Activated CD4-positive, alpha-beta T cell treated with anti-CD3 and anti-CD28 coated beads, Interleukin-2, amount 10 ng/mL, durations not matched to agents 24 days and 14 days (primary cell): ENCODE measurements at regions of chr19 and their contacts with region 1.

Region 1: GRCh38 chr19:12139885-12140547 is at the start of gene ZNF20:
- DNase-seq: peak; percentile 97
- H3K4me3 Mint-ChIP-seq: peak within 1 kb of the TSS; percentile 90
- H3K27ac Mint-ChIP-seq: peak within 1 kb of the TSS; percentile 84
- H3K4me1 Mint-ChIP-seq: peaks cover 28% of the 10 kb centered on the region
- H3K27me3 Mint-ChIP-seq: no peaks in the 10 kb centered on the region
- total RNA-seq, gene ZNF20: 2.0 and 2.1 TPM in 2 replicates

Region 2: DNA sequence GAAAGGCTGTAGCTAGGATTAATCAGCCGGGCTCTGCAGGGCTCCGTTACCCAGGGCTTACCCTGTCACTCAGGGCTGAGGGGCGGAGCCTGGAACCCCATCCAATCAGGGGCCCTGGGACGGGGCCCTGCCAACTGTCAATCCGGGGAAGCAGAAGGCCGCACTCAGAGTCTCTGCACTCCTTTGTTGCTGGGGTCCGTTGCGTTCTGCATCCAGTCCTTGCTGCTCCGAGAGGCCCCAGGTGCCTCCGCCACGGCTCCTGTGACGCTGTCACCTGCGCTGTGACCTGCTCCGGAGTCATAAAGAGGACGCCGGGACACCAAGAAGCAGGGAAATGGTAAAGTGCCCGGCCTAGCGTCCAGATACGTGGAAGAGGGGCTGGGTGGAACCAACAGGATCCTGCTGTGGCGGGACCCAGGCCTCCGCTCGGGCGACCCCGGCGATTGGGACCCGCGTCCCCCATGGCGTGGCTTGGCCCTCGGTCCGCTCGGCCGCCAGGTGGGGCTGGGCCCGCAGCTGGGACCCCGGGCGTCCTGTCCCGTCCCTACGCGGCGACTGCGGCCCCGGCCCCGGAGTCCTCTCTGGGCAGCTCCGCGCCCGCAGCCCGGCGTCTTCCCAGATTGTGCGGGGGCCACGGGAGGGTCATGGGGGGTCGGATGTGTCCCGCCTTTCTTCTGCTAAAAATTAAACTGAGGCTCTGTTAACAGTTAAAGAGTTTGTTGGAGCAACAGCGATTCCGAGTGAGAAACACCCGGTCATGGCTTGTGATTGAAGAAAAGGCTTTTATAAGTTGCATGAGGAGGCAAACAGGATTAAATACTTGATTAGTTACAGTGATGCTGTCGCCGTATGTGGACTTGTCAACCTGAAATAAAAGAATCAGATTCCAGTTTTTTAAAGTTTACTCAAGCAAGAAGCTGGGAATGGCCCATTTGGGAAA is 341.4 kb before region 1 on chr19 and contains the start of gene ZNF491:
- intact Hi-C with region 1: loop called (anchors 1 kb)
- DNase-seq: peak; percentile 91
- H3K4me3 Mint-ChIP-seq: peak within 1 kb of the TSS; percentile 84
- H3K27ac Mint-ChIP-seq: peak within 1 kb of the TSS; percentile 84
- H3K4me1 Mint-ChIP-seq: peaks cover 9% of the 10 kb centered on the region
- H3K27me3 Mint-ChIP-seq: no peaks in the 10 kb centered on the region
- total RNA-seq, gene ZNF491: 0.12 and 0.68 TPM in 2 replicates

Region 3: GRCh38 chr19:11881151-11881800 is 258.7 kb before region 1 on chr19:
- intact Hi-C with region 1: loop called (anchors 1 kb)
- DNase-seq: peak; percentile 88
- H3K4me3 Mint-ChIP-seq: no peak overlapping the region
- H3K27ac Mint-ChIP-seq: no peak overlapping the region
- H3K4me1 Mint-ChIP-seq: peaks cover 2% of the 10 kb centered on the region
- H3K27me3 Mint-ChIP-seq: peaks cover 2% of the 10 kb centered on the region

Region 4: DNA sequence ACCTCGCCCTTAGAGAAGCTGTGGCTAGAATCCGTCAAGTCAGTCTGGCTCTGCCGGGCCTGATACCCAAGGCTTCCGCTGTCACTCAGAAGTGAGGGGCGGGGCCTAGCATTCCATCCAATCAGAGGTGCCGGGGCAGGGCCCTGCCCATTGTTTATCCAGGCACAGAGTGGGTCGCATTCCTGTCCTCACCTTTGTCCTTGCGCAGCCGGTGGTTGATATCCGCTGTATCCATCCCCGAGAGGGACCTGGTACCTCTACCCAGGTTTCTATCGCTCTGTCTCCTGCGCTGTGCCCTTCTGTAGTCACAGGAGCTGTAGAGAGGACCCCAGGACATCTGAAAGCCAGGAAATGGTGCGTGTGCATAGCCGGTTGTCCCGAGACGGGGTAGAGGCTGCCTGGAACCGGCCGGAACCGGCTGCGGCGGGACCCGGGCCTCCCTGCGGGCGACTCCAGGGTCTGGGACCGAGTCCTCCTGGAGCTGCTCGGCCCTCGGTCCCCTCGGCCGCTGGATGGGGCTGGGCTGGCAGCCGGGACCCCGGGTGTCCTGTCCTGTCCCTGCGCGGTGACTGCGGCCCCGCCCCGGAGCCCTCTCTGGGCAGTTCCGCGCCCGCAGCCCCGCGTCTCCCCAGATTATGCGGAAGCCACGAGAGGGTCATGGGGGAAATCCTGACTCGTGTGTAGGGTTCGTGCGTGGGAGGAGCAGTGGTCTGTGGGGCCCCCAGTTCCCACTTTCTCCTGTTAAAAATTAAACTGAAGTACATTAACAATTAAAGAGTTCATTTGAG is 175.0 kb before region 1 on chr19 and contains the start of gene ZNF763:
- intact Hi-C with region 1: loop called (anchors 1 kb)
- DNase-seq: peak; percentile 93
- H3K4me3 Mint-ChIP-seq: peak within 1 kb of the TSS; percentile 83
- H3K27ac Mint-ChIP-seq: peak within 1 kb of the TSS; percentile 78
- H3K4me1 Mint-ChIP-seq: peaks cover 16% of the 10 kb centered on the region
- H3K27me3 Mint-ChIP-seq: no peaks in the 10 kb centered on the region
- total RNA-seq, gene ZNF763: 0.31 and 0.51 TPM in 2 replicates

Region 5: GRCh38 chr19:12075538-12076139 is 64.4 kb before region 1 on chr19:
- intact Hi-C with region 1: no loop called
- DNase-seq: no peak
- H3K4me3 Mint-ChIP-seq: no peak overlapping the region
- H3K27ac Mint-ChIP-seq: no peak overlapping the region
- H3K4me1 Mint-ChIP-seq: no peaks in the 10 kb centered on the region
- H3K27me3 Mint-ChIP-seq: no peaks in the 10 kb centered on the region

Region 6: GRCh38 chr19:12090807-12091206 is 49.2 kb before region 1 on chr19:
- intact Hi-C with region 1: loop called (anchors 1 kb)
- DNase-seq: peak; percentile 87
- H3K4me3 Mint-ChIP-seq: peak overlapping the region; percentile 53
- H3K27ac Mint-ChIP-seq: no peak overlapping the region
- H3K4me1 Mint-ChIP-seq: peaks cover 15% of the 10 kb centered on the region
- H3K27me3 Mint-ChIP-seq: no peaks in the 10 kb centered on the region

Region 7: DNA sequence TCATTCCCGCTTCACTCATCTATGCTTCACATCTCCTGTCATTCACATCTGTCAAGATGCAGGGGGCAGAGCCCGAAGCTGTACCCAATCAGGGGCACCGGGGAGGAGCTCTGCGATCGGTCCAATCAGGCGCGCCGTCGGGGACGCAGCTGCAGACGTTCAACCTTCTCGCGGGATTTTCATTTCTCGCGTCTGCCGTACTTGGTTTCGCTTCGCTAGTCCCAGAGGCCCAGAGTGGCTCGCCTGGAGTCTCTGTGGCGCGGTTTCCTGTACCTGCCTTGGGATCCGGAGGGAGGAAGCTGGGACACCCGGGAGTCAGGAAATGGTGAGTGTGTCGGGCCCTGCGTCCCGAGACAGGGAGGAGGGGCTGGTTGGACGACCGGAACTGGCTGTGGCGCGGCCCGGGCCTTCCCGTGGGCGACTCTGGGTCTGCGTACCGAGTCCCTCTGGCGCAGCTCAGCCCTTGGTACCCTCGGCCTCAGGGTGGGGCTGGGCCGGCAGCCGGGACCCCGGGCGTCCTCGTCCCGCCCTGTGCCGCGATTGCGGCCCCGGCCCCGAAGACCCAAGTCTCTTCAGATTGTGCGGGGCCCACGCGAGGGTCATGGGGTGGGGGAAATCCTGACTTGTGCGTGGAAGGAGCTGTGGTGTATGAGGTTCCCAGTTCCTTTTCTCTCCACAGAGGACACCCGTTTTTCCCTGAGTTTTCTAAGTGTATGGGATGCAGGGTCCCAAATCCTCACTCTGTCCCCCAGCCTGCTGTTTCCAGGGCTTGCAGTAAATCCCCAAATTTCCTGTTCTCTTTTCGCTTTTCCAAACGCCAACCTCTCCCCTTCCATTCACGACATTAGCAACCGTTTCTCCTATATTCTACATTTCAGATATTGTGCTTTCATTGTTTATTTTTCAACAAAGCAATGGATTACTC is 23.1 kb after region 1 on chr19 and contains the start of gene ZNF136:
- intact Hi-C with region 1: no loop called
- DNase-seq: peak; percentile 98
- H3K4me3 Mint-ChIP-seq: peak within 1 kb of the TSS; percentile 95
- H3K27ac Mint-ChIP-seq: peak within 1 kb of the TSS; percentile 96
- H3K4me1 Mint-ChIP-seq: peaks cover 28% of the 10 kb centered on the region
- H3K27me3 Mint-ChIP-seq: no peaks in the 10 kb centered on the region
- total RNA-seq, gene ZNF136: 9.4 and 10.3 TPM in 2 replicates